ENCODE measurements at regions of chr6 and their contacts with region 1.

Region 1: GRCh38 chr6:113574147-113574546 is 283.0 kb upstream of the MARCKS start:
- DNase-seq: no peak
- ATAC-seq: no peak
- H3K4me3 ChIP-seq: no peak overlapping the region
- H3K27ac ChIP-seq: no peak overlapping the region
- H3K4me1 ChIP-seq: no peaks in the 10 kb centered on the region
- H3K27me3 ChIP-seq: no peaks in the 10 kb centered on the region
- CTCF ChIP-seq: no peak

Region 2: GRCh38 chr6:113598786-113599185 is 24.6 kb after region 1 on chr6:
- CTCF ChIA-PET with region 1: no interaction called
- POLR2A ChIA-PET with region 1: no interaction called
- in situ Hi-C with region 1: no loop called
- intact Hi-C with region 1: loop called (anchors 1 kb)
- DNase-seq: no peak
- ATAC-seq: no peak
- H3K4me3 ChIP-seq: no peak overlapping the region
- H3K27ac ChIP-seq: no peak overlapping the region
- H3K4me1 ChIP-seq: no peaks in the 10 kb centered on the region
- H3K27me3 ChIP-seq: no peaks in the 10 kb centered on the region
- CTCF ChIP-seq: no peak

Measured in Panc1 (cell line).